HAP-1 (cell line): ENCODE measurements at regions of chr17 and their contacts with region 1.

Region 1: DNA sequence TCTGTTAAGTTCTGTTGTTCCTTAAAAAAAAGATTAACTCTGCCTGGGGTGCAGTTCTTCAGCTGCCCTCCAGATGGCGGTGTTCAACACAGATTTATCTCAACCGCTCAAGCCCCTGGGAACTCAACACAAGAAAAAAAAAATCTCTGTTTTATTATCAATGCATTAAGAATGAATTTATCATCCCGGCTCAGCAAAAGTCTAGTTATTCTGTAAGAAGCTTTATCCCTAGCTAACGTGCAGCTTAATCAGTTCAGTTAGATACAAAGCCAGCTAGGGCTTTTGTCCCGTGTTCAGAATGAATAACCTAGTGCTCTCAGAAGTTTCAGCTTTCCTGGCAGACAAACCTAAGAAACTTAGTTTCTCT is 475.9 kb upstream of the CCL2 start:
- DNase-seq: peak; percentile 48 to 50
- H3K4me3 ChIP-seq: no peak overlapping the region
- H3K4me1 ChIP-seq: no peaks in the 10 kb centered on the region
- H3K27me3 ChIP-seq: no peaks in the 10 kb centered on the region

Region 2: GRCh38 chr17:33811004-33811760 is 32.0 kb after region 1 on chr17:
- in situ Hi-C with region 1: no loop called
- DNase-seq: no peak
- H3K4me3 ChIP-seq: no peak overlapping the region
- H3K4me1 ChIP-seq: no peaks in the 10 kb centered on the region
- H3K27me3 ChIP-seq: no peaks in the 10 kb centered on the region

Region 3: DNA sequence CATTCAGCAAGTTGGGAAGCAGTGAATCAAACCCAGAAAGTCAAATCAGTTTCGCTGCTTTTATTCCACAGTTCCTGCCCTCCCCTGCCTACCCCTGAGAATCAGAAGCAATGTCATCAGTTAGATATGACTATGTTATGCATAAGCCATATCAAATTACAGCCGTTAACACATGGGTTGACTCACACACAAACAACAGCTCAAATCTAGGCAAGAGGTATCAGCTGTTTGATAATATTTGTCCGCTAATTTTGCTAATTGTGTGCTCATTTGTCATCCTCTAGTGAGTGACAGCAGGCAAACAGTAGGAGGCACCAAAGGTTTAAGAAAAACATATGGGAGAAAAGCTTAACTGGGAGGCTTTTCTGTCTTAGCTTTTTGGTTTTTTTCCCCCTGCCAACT is 148.5 kb after region 1 on chr17:
- in situ Hi-C with region 1: loop called (anchors 25 kb)
- DNase-seq: no peak
- H3K4me3 ChIP-seq: no peak overlapping the region
- H3K4me1 ChIP-seq: no peaks in the 10 kb centered on the region
- H3K27me3 ChIP-seq: no peaks in the 10 kb centered on the region

Region 4: DNA sequence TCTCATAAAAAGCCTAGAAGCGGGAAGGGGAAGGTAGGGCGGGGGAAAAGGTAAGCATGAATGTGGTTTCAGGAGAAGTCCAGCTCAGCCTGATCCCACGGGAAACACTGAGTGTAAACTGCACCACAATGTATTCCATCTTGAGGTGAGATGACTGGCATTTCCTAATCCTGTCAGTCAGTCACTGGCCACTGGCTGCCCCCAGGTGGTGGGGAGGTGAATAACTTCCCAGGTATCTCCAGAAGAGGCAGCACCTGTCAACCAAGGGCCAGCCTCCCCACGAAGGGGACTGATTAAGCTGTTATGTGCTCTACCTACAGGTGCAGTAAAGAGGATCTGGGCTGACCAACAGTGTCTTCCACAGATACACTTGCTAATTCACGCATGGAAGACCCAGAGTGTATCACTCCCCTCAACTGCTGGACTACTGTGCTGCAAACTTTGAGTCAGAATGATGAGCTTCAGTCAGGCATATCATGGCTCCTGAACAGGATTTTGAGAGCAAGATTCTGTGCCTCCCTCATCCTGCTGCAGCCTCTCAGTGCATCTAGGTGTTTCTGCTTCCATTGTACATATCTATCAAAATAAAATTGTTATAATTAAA is 367.3 kb after region 1 on chr17:
- in situ Hi-C with region 1: loop called (anchors 25 kb)
- DNase-seq: peak; percentile 8 to 73
- H3K4me3 ChIP-seq: no peak overlapping the region
- H3K4me1 ChIP-seq: peaks cover 5% of the 10 kb centered on the region; the same call in 1 of the 2 replicates
- H3K27me3 ChIP-seq: no peaks in the 10 kb centered on the region

Region 5: GRCh38 chr17:34361478-34362061 is 582.4 kb after region 1 on chr17:
- in situ Hi-C with region 1: loop called (anchors 25 kb)
- DNase-seq: peak; percentile 65 to 90
- H3K4me3 ChIP-seq: no peak overlapping the region
- H3K4me1 ChIP-seq: no peaks in the 10 kb centered on the region
- H3K27me3 ChIP-seq: no peaks in the 10 kb centered on the region